Mammary epithelial cell (primary cell): ENCODE measurements at regions of chr12 and their contacts with region 1.

Region 1: GRCh38 chr12:93127582-93128331 is 198.7 kb upstream of the EEA1 start:
- DNase-seq: peak; percentile 71
- H3K4me3 ChIP-seq: no peak overlapping the region
- H3K27ac ChIP-seq: no peak overlapping the region
- H3K4me1 ChIP-seq: peaks cover 28% of the 10 kb centered on the region
- H3K27me3 ChIP-seq: no peaks in the 10 kb centered on the region
- CTCF ChIP-seq: peak; percentile 50 to 59

Region 2: GRCh38 chr12:92973601-92974000 is 154.2 kb before region 1 on chr12:
- CTCF ChIA-PET with region 1: no interaction called
- dilution Hi-C with region 1: no loop called
- in situ Hi-C with region 1: no loop called
- intact Hi-C with region 1: no loop called
- DNase-seq: peak; percentile 97
- H3K4me3 ChIP-seq: no peak overlapping the region
- H3K27ac ChIP-seq: peak overlapping the region; percentile 60
- H3K4me1 ChIP-seq: peaks cover 42% of the 10 kb centered on the region
- H3K27me3 ChIP-seq: no peaks in the 10 kb centered on the region
- CTCF ChIP-seq: no peak

Region 3: DNA sequence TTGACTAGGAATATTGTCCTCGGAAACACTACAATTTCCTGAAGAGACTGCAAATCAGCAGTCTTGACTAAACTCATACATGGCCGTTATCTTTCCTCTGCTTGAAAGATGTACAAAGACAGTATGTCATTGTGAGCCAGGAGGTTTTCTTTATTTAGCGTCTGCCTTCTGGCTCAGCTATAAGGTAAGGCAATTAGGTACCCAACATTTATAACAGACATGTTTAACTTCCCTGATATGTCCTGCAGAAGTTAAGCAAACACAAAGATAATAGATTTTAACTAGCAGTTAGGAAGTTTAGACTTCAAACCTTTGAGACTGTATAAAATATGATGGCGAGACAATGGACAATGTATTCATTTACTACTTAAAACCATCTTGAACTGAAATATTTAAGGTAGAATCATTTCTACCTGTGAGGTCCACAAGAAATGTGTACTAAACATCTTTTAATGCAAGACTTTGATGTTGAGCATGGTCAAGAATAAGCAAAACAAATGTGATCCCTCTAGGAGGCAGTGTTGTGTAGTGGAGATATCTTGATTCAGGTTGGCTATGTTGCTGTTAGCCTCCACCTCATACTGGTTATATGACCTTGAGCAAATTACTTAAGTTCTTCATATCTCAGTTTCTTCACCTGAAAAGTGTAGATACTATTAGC is 102.5 kb before region 1 on chr12:
- CTCF ChIA-PET with region 1: no interaction called
- dilution Hi-C with region 1: no loop called
- in situ Hi-C with region 1: no loop called
- intact Hi-C with region 1: loop called (anchors 1 kb)
- DNase-seq: peak; percentile 58
- H3K4me3 ChIP-seq: no peak overlapping the region
- H3K27ac ChIP-seq: no peak overlapping the region
- H3K4me1 ChIP-seq: no peaks in the 10 kb centered on the region
- H3K27me3 ChIP-seq: no peaks in the 10 kb centered on the region
- CTCF ChIP-seq: peak; percentile 60 to 79

Region 4: DNA sequence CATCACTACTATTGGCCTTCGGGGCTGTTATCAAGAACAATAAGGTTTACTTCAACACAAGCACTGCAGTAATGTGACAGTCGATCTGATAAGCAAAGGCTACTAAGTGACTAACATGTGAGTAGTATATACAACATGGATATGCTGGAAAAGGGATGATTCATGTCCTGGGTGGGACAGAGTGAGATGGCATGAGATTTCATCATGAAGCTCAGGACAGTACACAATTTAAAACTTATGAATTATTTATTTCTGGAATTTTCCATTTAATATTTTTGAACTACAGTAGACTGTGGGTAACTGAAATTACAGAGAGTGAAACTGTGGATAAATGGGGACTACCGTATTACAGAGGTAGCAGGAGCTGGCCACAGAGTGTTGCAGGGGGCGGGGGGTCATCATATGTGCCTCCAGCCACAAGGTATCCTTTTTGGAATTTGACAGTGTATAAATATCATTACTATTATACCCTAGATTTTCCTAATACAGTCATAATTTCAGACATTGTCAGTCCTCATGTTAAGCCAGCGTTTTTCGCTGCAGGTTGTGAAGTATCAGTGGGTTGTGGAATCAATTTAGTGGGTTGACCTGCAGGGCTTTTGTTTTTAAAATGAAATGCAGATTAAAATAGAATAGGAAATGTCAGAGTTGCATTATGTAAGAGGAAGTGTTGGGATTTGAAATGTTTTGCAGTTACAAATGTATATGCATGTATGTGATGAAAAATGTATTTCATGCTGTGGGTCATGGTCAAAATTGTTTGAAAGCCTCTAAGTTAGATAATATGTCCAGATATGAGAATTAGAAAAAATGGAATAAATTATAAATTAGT is 102.0 kb after region 1 on chr12:
- CTCF ChIA-PET with region 1: no interaction called
- dilution Hi-C with region 1: no loop called
- in situ Hi-C with region 1: no loop called
- intact Hi-C with region 1: loop called (anchors 10 kb)
- DNase-seq: peak; percentile 87
- H3K4me3 ChIP-seq: no peak overlapping the region
- H3K27ac ChIP-seq: peak overlapping the region; percentile 61
- H3K4me1 ChIP-seq: peaks cover 22% of the 10 kb centered on the region
- H3K27me3 ChIP-seq: no peaks in the 10 kb centered on the region
- CTCF ChIP-seq: no peak

Region 5: DNA sequence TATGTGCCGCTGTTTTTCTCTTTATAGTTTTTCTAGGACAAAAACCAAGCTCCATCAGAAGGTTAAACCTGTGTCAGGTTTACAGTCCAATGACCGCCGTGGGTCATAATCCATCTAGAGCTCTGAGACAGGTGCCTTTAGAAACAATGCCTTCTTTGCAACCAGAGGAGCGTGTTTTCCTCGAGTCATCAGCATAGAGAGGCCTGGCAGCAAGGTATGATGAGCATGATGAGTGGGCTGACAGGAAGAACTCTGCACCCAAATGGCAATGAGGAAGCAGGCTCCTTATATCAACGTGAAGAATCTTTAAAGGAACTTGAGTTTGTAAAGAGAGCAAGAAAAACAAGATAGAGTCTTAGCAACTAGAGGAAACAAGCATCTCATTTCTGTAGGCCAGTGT is 189.5 kb after region 1 on chr12:
- CTCF ChIA-PET with region 1: no interaction called
- dilution Hi-C with region 1: loop called (anchors 5 kb)
- in situ Hi-C with region 1: no loop called
- intact Hi-C with region 1: no loop called
- DNase-seq: peak; percentile 16
- H3K4me3 ChIP-seq: no peak overlapping the region
- H3K27ac ChIP-seq: no peak overlapping the region
- H3K4me1 ChIP-seq: peaks cover 3% of the 10 kb centered on the region
- H3K27me3 ChIP-seq: no peaks in the 10 kb centered on the region
- CTCF ChIP-seq: no peak